Activated CD4-positive, alpha-beta memory T cell treated with anti-CD3 and anti-CD28 coated beads, Interleukin-2, amount 10 ng/mL, durations not matched to agents 7 days and 5 days (primary cell): ENCODE measurements at regions of chr17 and their contacts with region 1.

Region 1: GRCh38 chr17:45247429-45248131 is 14.3 kb downstream of the SPATA32 start:
- DNase-seq: peak; percentile 99
- H3K4me3 Mint-ChIP-seq: peak overlapping the region; percentile 87
- H3K27ac Mint-ChIP-seq: peak overlapping the region; percentile 84
- H3K4me1 Mint-ChIP-seq: peaks cover 62% of the 10 kb centered on the region
- H3K27me3 Mint-ChIP-seq: no peaks in the 10 kb centered on the region

Region 2: DNA sequence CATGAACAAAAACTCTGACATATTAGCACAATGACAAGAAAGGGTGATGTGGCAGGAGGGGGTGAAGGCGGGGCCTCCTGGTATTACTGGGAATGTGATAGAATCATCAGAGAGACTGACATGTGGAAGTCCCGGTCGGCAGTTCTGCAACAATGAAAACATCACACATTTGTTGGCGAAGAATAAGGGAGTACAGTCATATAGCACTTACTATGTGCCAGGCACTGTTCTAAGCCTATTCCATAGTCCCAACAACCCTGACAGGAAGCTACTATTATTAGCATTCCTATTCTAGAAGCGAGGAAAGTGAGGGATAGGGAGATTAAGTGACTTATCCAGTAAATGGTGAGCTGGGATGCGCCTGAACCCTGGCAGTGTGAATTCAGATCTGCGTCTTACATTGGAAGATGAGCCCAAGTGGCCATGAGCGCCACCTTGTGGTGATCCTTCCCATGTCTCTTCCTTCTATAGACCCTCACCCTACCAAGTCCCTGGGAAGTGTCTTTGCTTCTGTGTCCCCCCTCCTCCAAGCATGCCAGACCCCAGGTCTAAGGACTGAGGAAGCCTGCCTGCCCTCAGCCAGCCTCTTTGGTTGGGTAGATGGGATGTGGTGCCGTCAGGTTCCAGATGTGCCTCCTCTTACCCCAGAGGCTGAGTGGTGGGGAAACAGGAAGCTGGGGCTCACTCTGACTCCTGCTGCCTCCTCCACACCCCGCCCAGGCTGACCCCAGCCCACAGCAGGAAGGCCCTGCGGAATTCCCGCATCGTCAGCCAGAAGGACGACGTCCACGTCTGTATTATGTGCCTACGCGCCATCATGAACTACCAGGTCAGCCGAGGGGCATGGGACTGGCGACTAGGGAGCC is 11.9 kb before region 1 on chr17:
- CTCF ChIA-PET with region 1: interaction called, 15 read pairs
- POLR2A ChIA-PET with region 1: interaction called, 528 read pairs
- DNase-seq: peak; percentile 79
- H3K4me3 Mint-ChIP-seq: no peak overlapping the region
- H3K27ac Mint-ChIP-seq: peak overlapping the region; percentile 74
- H3K4me1 Mint-ChIP-seq: peaks cover 67% of the 10 kb centered on the region
- H3K27me3 Mint-ChIP-seq: no peaks in the 10 kb centered on the region

Region 3: DNA sequence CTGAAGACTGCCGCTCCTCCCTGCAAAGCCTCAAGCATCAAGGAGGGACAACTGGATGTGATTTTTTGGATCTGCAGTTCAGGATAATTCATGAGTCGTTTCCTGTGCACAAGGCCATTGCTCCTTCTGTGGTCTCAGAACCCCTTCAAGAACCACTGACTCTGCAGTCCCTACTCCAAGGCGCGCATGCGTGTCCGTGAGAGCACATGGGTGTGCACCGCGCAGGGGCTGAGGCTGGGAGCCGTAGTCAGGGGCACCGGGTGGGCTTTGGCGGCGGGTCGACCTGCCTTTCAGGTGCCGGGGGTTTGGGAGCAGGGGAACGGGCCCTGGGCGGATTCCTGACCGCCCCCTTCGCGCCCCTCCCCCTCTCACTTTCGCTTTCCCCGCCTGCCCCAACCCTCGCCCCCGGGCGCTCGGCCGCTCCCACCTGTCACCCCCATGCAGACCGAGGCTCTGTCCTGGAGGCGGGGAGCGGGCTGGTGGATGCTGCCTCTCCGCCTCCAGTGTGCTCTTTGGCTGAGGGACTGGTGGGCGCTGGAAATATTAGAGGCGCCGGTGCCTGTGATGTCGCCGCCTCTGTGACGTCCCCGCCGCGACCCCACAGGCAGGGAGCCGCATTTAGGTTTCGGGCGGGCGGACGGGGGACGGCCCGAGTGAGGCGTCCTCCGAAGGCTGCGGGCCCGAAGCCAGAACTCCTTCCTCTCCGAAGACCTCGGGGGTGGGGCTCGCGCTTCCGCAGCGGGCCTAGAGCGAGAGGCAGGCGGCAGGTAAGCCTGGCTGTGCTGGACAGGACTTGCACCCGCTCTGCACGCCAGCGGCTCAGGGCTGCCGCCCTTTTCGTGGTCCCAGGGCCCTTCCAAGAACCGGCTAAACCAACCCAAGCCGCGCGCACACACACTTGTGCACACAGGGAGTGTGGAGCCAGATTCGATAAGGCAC is 14.3 kb after region 1 on chr17 and contains the start of gene SPATA32:
- CTCF ChIA-PET with region 1: interaction called, 8 read pairs
- POLR2A ChIA-PET with region 1: interaction called, 19 read pairs
- DNase-seq: peak; percentile 75
- H3K4me3 Mint-ChIP-seq: peak within 1 kb of the TSS; percentile 70
- H3K27ac Mint-ChIP-seq: peak within 1 kb of the TSS; percentile 61
- H3K4me1 Mint-ChIP-seq: peaks cover 22% of the 10 kb centered on the region
- H3K27me3 Mint-ChIP-seq: no peaks in the 10 kb centered on the region
- total RNA-seq, gene SPATA32: 0.20 to 0.23 TPM

Region 4: DNA sequence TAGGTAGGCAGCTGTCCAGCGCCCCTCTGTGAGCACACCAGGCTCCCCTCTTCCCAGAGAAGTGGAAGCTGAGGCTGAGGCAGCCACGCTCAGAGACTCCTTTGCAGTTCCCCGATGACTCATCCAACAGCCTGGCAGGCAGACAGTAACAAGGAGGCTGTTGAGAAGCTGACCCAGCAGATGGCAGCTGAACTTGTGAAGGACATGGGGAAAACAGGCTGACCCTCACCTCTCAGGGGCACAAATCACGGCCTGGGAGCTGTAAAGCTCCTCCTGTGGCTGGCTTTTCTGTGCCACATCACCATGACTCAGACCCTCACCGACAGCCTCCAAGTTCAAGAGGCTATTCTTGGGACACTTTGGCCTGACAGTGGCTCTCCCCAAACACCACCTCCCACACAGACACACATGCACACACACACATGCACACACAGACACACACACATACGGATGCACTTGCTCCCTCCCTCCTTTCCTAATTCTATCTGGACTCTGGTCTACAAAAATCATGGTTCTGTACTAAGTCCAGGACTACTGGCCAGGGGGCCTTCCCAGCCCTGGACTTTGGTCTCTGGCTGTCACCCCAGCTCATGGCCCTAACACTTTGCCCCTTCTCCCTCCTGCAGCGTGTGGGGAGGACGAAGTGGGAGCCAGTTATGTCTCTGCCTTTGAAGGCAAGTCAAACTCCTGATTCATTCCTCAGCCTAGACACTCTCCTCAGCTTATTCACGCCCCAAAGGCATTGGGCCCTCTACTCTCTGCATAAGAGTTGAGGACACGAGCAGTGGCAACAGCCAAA is 46.0 kb after region 1 on chr17:
- CTCF ChIA-PET with region 1: no interaction called
- POLR2A ChIA-PET with region 1: no interaction called
- DNase-seq: no peak
- H3K4me3 Mint-ChIP-seq: no peak overlapping the region
- H3K27ac Mint-ChIP-seq: peak overlapping the region; percentile 63
- H3K4me1 Mint-ChIP-seq: peaks cover 76% of the 10 kb centered on the region
- H3K27me3 Mint-ChIP-seq: no peaks in the 10 kb centered on the region

Region 5: DNA sequence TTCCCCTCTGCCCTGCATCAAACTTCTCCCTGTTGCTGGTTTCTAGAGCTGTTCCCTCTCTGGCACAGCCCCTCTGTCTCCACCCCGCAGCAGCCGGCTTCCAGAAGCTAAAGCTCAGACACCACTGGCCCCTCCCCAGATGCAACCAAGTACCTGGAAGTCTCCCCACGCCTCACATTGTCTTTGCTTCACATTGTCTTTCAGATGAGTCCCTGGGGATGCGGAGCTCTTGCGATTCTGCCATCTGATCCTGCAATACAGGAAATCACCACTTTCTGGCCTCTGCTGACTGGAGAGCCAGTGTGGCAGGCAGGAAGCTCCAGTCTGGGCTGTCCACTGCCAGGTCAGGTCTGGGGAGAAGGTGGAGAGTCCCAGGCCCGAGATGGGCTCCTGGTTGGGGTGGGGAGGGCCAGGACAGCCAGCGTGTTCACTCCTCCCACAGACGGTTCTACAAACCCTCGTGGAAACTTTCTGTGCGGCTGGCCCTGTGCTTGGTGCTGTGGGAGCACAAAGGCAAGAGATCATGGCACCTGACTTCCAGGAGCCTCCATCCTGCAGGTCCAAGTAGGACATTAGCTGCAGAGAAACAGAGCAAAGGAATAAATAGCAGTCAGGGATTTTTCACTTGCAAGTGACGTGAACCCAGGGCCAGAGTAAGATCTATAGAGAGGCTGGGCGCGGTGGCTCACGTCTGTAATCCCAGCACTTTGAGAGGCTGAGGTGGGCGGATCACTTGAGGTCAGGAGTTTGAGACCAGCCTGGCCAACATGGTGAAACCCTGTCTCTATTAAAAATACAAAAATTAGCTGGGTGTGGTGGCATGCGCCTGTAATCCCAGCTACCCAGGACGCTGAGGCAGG is 117.2 kb after region 1 on chr17:
- CTCF ChIA-PET with region 1: no interaction called
- POLR2A ChIA-PET with region 1: no interaction called
- DNase-seq: no peak
- H3K4me3 Mint-ChIP-seq: no peak overlapping the region
- H3K27ac Mint-ChIP-seq: no peak overlapping the region
- H3K4me1 Mint-ChIP-seq: no peaks in the 10 kb centered on the region
- H3K27me3 Mint-ChIP-seq: peaks cover 27% of the 10 kb centered on the region